ENCODE measurements at regions of chr1 and their contacts with region 1.

Region 1: GRCh38 chr1:52702886-52703787 is 5.0 kb upstream of the COA7 start:
- DNase-seq: peak; percentile 91
- H3K4me3 Mint-ChIP-seq: peak overlapping the region; percentile 90
- H3K27ac Mint-ChIP-seq: peak overlapping the region; percentile 94
- H3K4me1 Mint-ChIP-seq: peaks cover 22% of the 10 kb centered on the region
- H3K27me3 Mint-ChIP-seq: no peaks in the 10 kb centered on the region

Region 2: DNA sequence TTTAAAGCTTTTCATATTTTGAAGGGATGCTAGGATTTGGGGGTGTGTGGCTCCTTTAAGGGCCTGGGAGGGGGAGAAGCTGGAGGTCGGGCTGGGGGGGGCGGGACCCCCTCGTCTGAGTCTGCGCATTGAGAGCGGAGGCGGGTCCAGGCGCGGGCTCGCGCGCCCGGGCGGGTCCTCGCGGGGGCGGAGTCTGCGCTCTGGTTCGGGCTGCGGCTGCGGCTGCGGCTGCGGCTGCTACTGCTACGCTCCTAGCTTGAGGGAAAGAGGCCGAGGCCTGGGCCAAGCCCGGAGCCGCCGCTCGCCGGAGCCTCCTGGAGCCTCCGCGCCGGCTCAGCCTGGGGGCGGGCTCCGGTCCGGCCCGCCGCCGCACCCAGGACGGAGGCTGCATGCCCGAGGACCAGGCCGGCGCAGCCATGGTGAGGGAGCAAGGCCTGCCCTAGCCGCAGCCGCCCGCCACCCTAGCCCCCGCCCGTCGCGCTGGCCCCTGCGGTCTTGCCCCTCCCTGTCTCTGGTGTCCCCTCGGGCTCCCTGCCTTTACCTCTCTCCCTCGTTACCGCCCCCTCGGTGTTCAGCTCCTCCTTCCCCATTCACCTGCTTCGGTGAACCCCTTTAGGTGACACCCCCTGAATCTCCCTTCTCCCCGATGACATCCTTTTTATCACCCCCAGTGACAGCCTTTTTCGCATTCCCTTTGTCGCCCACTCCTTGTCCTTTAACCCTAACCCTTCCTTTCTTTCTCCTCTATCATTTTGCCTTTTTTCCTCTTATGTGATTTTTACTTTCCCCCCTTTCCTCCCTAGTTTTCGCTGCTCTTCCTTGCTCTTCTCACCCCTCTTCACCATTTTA is 23.4 kb after region 1 on chr1 and contains the start of gene ZYG11B:
- CTCF ChIA-PET with region 1: interaction called, 10 read pairs
- POLR2A ChIA-PET with region 1: interaction called, 5 read pairs
- intact Hi-C with region 1: loop called (anchors 1 kb)
- DNase-seq: peak; percentile 94
- H3K4me3 Mint-ChIP-seq: peak within 1 kb of the TSS; percentile 81
- H3K27ac Mint-ChIP-seq: peak within 1 kb of the TSS; percentile 77
- H3K4me1 Mint-ChIP-seq: peaks cover 29% of the 10 kb centered on the region
- H3K27me3 Mint-ChIP-seq: no peaks in the 10 kb centered on the region
- total RNA-seq, gene ZYG11B: 14.2 to 14.8 TPM

Region 3: GRCh38 chr1:52748119-52748518 is 45.0 kb after region 1 on chr1:
- CTCF ChIA-PET with region 1: interaction called, 7 read pairs
- POLR2A ChIA-PET with region 1: no interaction called
- intact Hi-C with region 1: loop called (anchors 2 kb)
- DNase-seq: no peak
- H3K4me3 Mint-ChIP-seq: no peak overlapping the region
- H3K27ac Mint-ChIP-seq: no peak overlapping the region
- H3K4me1 Mint-ChIP-seq: peaks cover 18% of the 10 kb centered on the region
- H3K27me3 Mint-ChIP-seq: no peaks in the 10 kb centered on the region

Region 4: GRCh38 chr1:52825868-52826267 is 122.7 kb after region 1 on chr1:
- CTCF ChIA-PET with region 1: no interaction called
- POLR2A ChIA-PET with region 1: no interaction called
- intact Hi-C with region 1: loop called (anchors 5 kb)
- DNase-seq: no peak
- H3K4me3 Mint-ChIP-seq: no peak overlapping the region
- H3K27ac Mint-ChIP-seq: no peak overlapping the region
- H3K4me1 Mint-ChIP-seq: no peaks in the 10 kb centered on the region
- H3K27me3 Mint-ChIP-seq: no peaks in the 10 kb centered on the region

Region 5: GRCh38 chr1:52842643-52843309 is 139.6 kb after region 1 on chr1 and contains the start of gene ZYG11A:
- CTCF ChIA-PET with region 1: interaction called, 4 read pairs
- POLR2A ChIA-PET with region 1: no interaction called
- intact Hi-C with region 1: loop called (anchors 2 kb)
- DNase-seq: peak; percentile 86
- H3K4me3 Mint-ChIP-seq: peak within 1 kb of the TSS; percentile 58
- H3K27ac Mint-ChIP-seq: no peak within 1 kb of the TSS
- H3K4me1 Mint-ChIP-seq: peaks cover 2% of the 10 kb centered on the region
- H3K27me3 Mint-ChIP-seq: peaks cover 21% of the 10 kb centered on the region
- total RNA-seq, gene ZYG11A: 0.24 to 0.27 TPM

Region 6: DNA sequence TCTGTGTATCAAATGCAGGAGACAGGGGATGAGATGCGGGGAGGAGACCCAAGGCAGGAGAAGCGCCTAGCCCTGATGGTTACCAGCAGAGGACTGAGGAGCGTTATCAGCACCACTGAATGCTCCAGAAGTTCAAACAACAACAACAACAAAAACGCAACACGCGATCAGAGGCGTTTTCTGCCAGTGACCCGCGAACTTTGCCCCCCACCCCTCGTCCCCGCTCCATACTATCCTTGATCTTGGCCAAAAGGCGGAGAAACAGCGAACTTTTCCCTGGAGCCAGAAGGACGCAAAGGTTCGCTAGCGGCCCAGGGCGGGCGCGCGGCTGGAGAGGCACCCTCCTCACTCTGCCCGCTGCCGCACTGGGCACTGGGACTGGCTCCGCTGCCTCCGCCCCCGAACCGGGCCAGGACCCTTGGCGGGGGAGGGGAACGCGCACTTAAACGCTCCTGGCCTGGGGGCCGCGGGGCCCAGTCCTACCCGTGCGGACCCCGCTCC is 217.7 kb after region 1 on chr1:
- CTCF ChIA-PET with region 1: interaction called, 9 read pairs
- POLR2A ChIA-PET with region 1: no interaction called
- intact Hi-C with region 1: loop called (anchors 1 kb)
- DNase-seq: no peak
- H3K4me3 Mint-ChIP-seq: peak overlapping the region; percentile 76
- H3K27ac Mint-ChIP-seq: no peak overlapping the region
- H3K4me1 Mint-ChIP-seq: peaks cover 24% of the 10 kb centered on the region
- H3K27me3 Mint-ChIP-seq: no peaks in the 10 kb centered on the region

Region 7: GRCh38 chr1:53182111-53182593 is 479.0 kb after region 1 on chr1:
- CTCF ChIA-PET with region 1: interaction called, 4 read pairs
- POLR2A ChIA-PET with region 1: no interaction called
- intact Hi-C with region 1: loop called (anchors 2 kb)
- DNase-seq: peak; percentile 89
- H3K4me3 Mint-ChIP-seq: no peak overlapping the region
- H3K27ac Mint-ChIP-seq: no peak overlapping the region
- H3K4me1 Mint-ChIP-seq: no peaks in the 10 kb centered on the region
- H3K27me3 Mint-ChIP-seq: peaks cover 11% of the 10 kb centered on the region